ENCODE measurements at regions of chr13 and their contacts with region 1.

Region 1: GRCh38 chr13:42836930-42837690 is 55.7 kb downstream of the FAM216B start:
- DNase-seq: peak; percentile 24
- H3K4me3 Mint-ChIP-seq: no peak overlapping the region
- H3K27ac Mint-ChIP-seq: no peak overlapping the region
- H3K4me1 Mint-ChIP-seq: peaks cover 12% of the 10 kb centered on the region
- H3K27me3 Mint-ChIP-seq: no peaks in the 10 kb centered on the region
- CTCF ChIP-seq: no peak

Region 2: GRCh38 chr13:42412812-42413483 is 424.2 kb before region 1 on chr13:
- CTCF ChIA-PET with region 1: no interaction called
- intact Hi-C with region 1: no loop called
- DNase-seq: no peak
- H3K4me3 Mint-ChIP-seq: no peak overlapping the region
- H3K27ac Mint-ChIP-seq: no peak overlapping the region
- H3K4me1 Mint-ChIP-seq: no peaks in the 10 kb centered on the region
- H3K27me3 Mint-ChIP-seq: no peaks in the 10 kb centered on the region
- CTCF ChIP-seq: no peak

Region 3: DNA sequence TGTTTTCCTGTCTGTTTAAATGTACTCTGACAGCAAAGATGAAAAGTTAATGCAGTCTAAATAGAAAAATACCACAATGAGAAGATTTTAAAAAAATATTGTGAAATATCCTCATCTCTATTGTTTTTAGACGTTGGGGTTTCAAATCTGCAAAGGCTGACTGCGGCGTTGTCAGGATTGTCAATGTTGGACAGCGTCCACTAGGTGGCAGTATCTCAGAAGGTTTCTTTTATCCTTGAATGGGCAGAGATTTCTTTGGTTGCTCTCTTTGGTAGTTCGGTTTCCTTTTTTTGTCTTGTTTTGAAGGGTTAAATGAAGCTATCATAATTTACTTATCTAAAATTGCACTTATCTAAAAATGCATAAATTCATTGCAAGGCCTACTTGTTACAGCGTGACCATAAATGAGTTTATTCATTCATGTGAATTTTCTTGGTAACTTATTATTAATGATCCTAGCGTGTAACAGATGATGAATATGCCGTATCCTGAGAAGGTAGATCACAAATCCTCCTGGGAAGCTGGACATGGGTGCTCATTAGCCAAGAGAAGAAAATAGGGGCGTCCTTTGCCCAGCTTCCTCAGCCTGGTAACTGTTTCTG is 242.0 kb before region 1 on chr13:
- CTCF ChIA-PET with region 1: no interaction called
- intact Hi-C with region 1: loop called (anchors 10 kb)
- DNase-seq: peak; percentile 45
- H3K4me3 Mint-ChIP-seq: no peak overlapping the region
- H3K27ac Mint-ChIP-seq: no peak overlapping the region
- H3K4me1 Mint-ChIP-seq: no peaks in the 10 kb centered on the region
- H3K27me3 Mint-ChIP-seq: peaks cover 45% of the 10 kb centered on the region
- CTCF ChIP-seq: peak; percentile 41